ENCODE measurements at regions of chr3 and their contacts with region 1.

Region 1: GRCh38 chr3:177197041-177197727 is at the start of gene TBL1XR1:
- DNase-seq: peak; percentile 98
- H3K4me3 ChIP-seq: peak within 1 kb of the TSS; percentile 90 to 99 (median 98)
- H3K27ac ChIP-seq: peak within 1 kb of the TSS; percentile 99 to 100 (median 100)
- H3K4me1 ChIP-seq: peaks cover 23 to 34% (median 32%) of the 10 kb centered on the region in 4 donors
- H3K27me3 ChIP-seq: no peaks in the 10 kb centered on the region
- CTCF ChIP-seq: no peak
- EP300 ChIP-seq: no peak
- POLR2A ChIP-seq: no peak
- total RNA-seq, gene TBL1XR1: 65.0 to 99.2 (median 78.2) TPM

Region 2: DNA sequence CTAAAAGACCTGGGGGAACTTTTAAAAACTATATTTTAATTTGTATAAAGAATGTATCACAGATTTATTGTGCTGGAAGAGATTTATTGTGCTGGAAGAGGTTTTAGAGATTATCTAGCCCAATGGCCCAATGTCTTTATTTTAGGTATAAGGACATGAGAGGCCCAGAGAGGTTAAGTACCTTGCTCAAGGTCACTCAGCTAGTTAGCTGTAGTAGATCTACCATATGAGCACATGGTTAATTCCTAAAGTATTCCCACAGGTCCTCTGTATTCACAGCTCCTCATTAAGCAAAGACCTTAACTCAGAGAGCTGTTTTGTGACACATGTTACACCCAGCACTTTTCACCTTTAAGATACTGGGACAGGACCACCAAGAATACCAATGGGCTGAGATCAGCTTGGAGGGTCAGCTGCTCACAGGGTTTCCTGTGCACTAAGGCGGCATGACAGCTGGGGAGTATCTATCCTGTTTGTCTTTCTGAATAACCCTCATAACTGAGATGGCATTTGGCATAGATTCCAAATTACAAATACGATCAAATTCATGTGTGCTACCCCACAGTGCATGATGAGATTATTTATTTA is 143.2 kb after region 1 on chr3:
- intact Hi-C with region 1: loop called (anchors 5 kb)
- DNase-seq: no peak
- H3K4me3 ChIP-seq: no peak overlapping the region
- H3K27ac ChIP-seq: no peak overlapping the region
- H3K4me1 ChIP-seq: peaks cover 40 to 71% (median 51%) of the 10 kb centered on the region in 4 donors
- H3K27me3 ChIP-seq: no peaks in the 10 kb centered on the region
- CTCF ChIP-seq: no peak
- EP300 ChIP-seq: no peak
- POLR2A ChIP-seq: no peak

Region 3: DNA sequence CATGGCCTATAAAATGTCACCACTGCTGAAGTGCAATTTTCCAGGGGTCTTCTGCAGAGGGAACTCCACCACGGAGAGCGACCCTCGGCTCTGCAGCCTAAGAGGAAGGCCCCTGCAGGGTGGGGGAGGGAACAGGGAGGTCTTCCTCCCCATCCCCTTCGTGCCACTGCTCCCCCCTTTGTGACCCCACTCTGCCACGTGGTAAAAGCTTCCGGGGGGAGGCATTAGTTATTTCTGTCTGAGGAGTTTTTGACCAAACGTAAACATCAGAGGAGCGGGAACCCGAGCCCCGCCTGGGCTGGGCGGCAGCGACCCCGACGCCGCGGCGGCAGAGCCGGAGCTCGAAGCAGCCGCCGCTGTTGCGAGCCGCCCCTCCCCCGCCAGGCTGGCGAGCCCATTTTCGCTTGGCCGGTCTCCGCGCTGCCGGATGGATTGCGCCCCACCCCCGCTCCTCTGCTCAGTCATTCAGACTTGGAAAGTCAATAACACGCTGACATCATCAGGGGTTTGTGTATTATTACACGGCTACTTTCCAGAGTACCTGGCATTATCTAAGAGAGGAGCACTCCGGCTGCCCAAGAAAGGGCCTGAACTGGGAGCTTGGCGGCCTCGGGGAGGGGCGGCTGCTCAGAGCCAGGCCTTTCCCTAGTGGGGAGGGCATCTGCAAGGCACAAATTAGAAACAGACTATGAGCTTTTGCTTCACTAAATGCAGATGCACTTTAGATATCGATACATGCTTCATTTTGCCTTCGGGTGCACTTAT is 162.6 kb after region 1 on chr3:
- intact Hi-C with region 1: loop called (anchors 1 kb)
- DNase-seq: peak; percentile 98
- H3K4me3 ChIP-seq: peak overlapping the region; percentile 48 to 59 (median 50)
- H3K27ac ChIP-seq: peak overlapping the region; percentile 79 to 92 (median 90)
- H3K4me1 ChIP-seq: peaks cover 67 to 75% (median 72%) of the 10 kb centered on the region in 4 donors
- H3K27me3 ChIP-seq: no peaks in the 10 kb centered on the region
- CTCF ChIP-seq: peak in 1 of 3 experiments; percentile 33
- EP300 ChIP-seq: peak; percentile 93
- POLR2A ChIP-seq: no peak

Region 4: GRCh38 chr3:177426878-177427495 is 229.8 kb after region 1 on chr3:
- intact Hi-C with region 1: loop called (anchors 10 kb)
- DNase-seq: no peak
- H3K4me3 ChIP-seq: no peak overlapping the region
- H3K27ac ChIP-seq: no peak overlapping the region
- H3K4me1 ChIP-seq: peaks cover 0 to 14% (median 2%) of the 10 kb centered on the region in 4 donors
- H3K27me3 ChIP-seq: no peaks in the 10 kb centered on the region
- CTCF ChIP-seq: no peak
- EP300 ChIP-seq: no peak
- POLR2A ChIP-seq: no peak

Region 5: DNA sequence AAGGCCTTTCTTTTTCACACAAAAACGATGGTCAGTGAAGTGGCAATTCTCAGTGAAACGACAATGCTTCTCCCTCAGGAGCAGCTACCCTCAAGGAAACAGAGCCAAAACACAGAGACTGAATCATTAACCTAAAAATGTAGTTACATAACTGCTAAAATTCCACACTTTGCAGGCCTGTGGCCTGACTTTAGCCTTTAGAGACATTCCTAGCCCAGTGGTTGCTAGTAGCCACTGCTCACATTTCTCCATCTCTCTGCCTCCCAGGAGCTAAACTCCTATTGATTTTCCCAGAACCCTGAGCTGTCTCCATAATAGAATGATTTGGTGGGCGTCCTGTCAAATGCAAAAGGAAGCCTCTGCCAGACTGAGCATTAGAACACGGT is 708.9 kb after region 1 on chr3:
- intact Hi-C with region 1: loop called (anchors 10 kb)
- DNase-seq: no peak
- H3K4me3 ChIP-seq: no peak overlapping the region
- H3K27ac ChIP-seq: peak overlapping the region; percentile 75 to 82 (median 77)
- H3K4me1 ChIP-seq: peaks cover 11 to 56% (median 40%) of the 10 kb centered on the region in 4 donors
- H3K27me3 ChIP-seq: no peaks in the 10 kb centered on the region
- CTCF ChIP-seq: peak in 1 of 3 experiments; percentile 45
- EP300 ChIP-seq: no peak
- POLR2A ChIP-seq: no peak

Region 6: GRCh38 chr3:178385280-178385952 is 1188.2 kb after region 1 on chr3:
- intact Hi-C with region 1: loop called (anchors 10 kb)
- DNase-seq: no peak
- H3K4me3 ChIP-seq: no peak overlapping the region
- H3K27ac ChIP-seq: peak overlapping the region in 3 of 4 donors; percentile 52 to 68 (median 65)
- H3K4me1 ChIP-seq: peaks cover 28 to 39% (median 37%) of the 10 kb centered on the region in 4 donors
- H3K27me3 ChIP-seq: no peaks in the 10 kb centered on the region
- CTCF ChIP-seq: peak; percentile 88 to 92 (median 91)
- EP300 ChIP-seq: no peak
- POLR2A ChIP-seq: no peak